ENCODE measurements at regions of chr22 and their contacts with region 1.

Region 1: DNA sequence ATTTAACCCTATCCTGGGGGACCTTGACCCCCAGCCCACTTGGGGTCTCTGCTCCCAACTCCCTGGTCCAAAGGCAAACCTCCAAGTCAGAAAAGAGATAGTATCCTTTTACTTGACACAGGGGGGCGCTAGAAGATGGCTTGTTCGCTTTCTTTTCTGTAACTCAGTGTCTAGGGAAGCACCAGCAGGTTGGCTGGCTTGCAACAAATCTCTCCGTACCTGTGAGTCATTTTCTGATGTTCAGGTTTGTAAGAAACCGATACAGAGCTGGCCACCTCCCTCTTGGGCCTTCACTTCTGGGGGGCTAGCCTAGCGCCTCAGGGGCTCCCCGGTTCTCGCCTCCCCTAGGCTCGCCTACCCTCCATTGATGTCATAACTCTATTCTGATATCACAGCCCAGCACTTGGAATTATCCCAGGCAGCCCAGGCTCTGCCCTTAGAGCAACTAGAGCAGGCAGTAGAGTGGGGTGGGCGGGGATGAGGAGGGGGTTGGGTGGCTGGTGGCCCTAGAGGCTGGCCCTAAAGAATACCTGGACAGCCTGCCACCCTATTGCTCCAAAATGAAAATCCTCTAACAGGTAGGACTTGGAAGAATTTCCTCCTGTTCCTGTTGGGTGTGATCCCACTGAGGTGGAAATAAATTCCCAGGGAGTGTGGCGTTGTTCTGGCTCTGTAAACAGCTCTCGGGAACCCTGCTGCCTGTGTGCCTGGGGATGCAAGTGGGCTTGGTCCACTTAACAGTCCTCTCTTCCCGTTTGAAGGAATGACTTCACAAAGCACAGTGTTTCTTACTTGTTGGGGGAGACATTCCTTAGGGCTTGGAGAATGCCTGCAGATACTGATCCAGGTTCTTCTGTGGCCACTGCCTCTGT is 69.4 kb downstream of the OSBP2 start:
- DNase-seq: peak in 1 of 2 donors; percentile 60
- ATAC-seq: peak in 7 of 8 donors; percentile 47 to 82 (median 70)
- H3K4me3 ChIP-seq: no peak overlapping the region
- H3K27ac ChIP-seq: no peak overlapping the region
- H3K4me1 ChIP-seq: peaks cover 0 to 6% (median 0%) of the 10 kb centered on the region in 9 donors
- H3K27me3 ChIP-seq: no peaks in the 10 kb centered on the region
- CTCF ChIP-seq: peak; percentile 32 to 75 (median 68)

Region 2: DNA sequence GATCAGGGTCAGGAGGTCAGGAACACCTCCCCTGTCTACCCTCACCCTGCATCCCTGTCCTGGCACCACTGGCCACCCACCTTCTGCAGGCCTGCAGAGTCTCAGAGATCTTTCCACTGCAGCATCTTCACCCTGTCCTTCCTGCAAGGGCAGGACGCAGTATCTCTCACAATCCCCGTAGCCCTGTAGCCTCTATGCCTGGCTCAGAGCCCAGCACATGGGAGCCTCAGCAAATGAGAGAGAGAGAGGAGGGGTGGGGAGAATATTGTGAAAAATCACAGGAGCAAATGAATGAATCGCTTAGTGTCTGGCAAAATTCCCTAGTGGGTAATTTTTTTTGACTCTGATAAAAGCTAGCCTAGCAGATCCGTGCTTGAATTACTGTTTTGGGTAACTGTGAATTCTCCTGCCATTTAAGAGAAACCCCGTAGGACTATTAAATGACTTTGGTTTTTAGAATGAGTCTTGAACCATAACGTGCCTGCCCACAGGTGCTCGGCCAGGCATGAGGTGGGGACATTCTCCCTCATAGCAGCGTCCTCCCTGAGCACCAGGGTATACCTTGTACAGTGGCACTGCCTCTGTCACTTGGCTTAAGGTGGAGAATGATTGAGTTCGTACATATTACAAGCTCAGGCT is 113.0 kb after region 1 on chr22:
- intact Hi-C with region 1: loop called in 1 of 10 experiments (anchors 10 kb)
- DNase-seq: peak; percentile 41 to 49
- ATAC-seq: peak in 6 of 8 donors; percentile 19 to 57 (median 45)
- H3K4me3 ChIP-seq: no peak overlapping the region
- H3K27ac ChIP-seq: peak overlapping the region in 5 of 10 donors; percentile 58 to 74 (median 66)
- H3K4me1 ChIP-seq: peaks cover 4 to 67% (median 46%) of the 10 kb centered on the region in 9 donors
- H3K27me3 ChIP-seq: no peaks in the 10 kb centered on the region
- CTCF ChIP-seq: no peak

Region 3: GRCh38 chr22:30890686-30891442 is 126.8 kb after region 1 on chr22:
- intact Hi-C with region 1: loop called in 2 of 10 experiments (anchors 5 to 10 kb)
- DNase-seq: peak in 1 of 2 donors; percentile 22
- ATAC-seq: peak in 6 of 8 donors; percentile 41 to 65 (median 54)
- H3K4me3 ChIP-seq: no peak overlapping the region
- H3K27ac ChIP-seq: no peak overlapping the region
- H3K4me1 ChIP-seq: no peaks in the 10 kb centered on the region
- H3K27me3 ChIP-seq: no peaks in the 10 kb centered on the region
- CTCF ChIP-seq: peak; percentile 52 to 84 (median 73)

Region 4: GRCh38 chr22:30920407-30920806 is 156.4 kb after region 1 on chr22:
- intact Hi-C with region 1: loop called (anchors 1 to 5 kb)
- DNase-seq: peak; percentile 76 to 84
- ATAC-seq: peak in 6 of 8 donors; percentile 42 to 81 (median 64)
- H3K4me3 ChIP-seq: peak overlapping the region in 1 of 10 donors; percentile 19
- H3K27ac ChIP-seq: no peak overlapping the region
- H3K4me1 ChIP-seq: peaks cover 0 to 20% (median 11%) of the 10 kb centered on the region in 9 donors
- H3K27me3 ChIP-seq: no peaks in the 10 kb centered on the region
- CTCF ChIP-seq: peak; percentile 85 to 96 (median 92)

Region 5: DNA sequence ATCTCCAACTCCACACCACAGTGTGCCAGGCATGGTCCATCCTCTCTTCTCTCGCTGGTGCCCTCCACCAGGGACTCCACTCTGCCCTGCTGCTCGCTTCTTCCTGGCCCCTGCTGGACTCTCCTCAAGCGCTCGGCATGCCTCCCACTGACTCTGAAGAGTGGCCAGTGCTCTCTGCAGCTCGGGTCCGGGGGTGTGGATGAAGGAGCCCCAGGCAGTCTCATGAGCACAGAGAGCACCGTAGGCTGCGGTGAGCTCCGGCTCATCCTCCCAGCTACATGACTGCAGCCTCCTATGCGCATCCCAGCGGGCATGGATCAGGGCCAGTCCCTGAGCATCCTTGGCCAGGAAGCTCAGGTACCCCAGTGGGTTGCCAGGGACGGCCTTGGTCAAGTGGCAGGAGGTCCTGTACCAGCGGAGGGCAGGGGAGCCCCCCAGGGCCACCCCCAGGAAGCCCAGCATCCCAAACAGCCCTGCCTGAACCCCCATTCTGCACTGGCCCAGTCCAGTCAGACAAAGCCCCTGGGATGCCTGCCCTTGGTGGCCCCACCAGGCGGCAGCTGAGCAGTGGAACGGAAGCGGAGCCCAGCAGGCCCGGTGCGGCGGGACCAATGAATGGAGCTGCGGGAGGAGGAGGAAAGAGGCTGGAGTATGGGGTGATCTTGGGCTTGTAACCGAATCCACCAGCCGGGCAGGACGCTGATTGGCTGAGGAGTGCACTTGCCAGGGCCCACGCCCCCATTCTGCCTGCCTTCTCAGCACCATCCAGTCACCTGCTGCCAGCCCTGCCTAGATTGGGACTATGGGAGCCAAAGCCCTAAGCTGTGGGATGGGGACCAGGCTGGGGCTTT is 376.0 kb after region 1 on chr22 and contains the start of gene PLA2G3:
- intact Hi-C with region 1: loop called in 5 of 10 experiments (anchors 5 to 10 kb)
- DNase-seq: no peak
- ATAC-seq: peak in 5 of 8 donors; percentile 19 to 37 (median 32)
- H3K4me3 ChIP-seq: no peak within 1 kb of the TSS
- H3K27ac ChIP-seq: no peak within 1 kb of the TSS
- H3K4me1 ChIP-seq: peaks cover 0 to 13% (median 0%) of the 10 kb centered on the region in 9 donors
- H3K27me3 ChIP-seq: peaks cover 0 to 19% (median 5%) of the 10 kb centered on the region in 7 donors
- CTCF ChIP-seq: peak in 1 of 9 donors; percentile 9
- total RNA-seq, gene PLA2G3: not detected